CD4-positive, alpha-beta memory T cell (primary cell): ENCODE measurements at regions of chr19 and their contacts with region 1.

Region 1: DNA sequence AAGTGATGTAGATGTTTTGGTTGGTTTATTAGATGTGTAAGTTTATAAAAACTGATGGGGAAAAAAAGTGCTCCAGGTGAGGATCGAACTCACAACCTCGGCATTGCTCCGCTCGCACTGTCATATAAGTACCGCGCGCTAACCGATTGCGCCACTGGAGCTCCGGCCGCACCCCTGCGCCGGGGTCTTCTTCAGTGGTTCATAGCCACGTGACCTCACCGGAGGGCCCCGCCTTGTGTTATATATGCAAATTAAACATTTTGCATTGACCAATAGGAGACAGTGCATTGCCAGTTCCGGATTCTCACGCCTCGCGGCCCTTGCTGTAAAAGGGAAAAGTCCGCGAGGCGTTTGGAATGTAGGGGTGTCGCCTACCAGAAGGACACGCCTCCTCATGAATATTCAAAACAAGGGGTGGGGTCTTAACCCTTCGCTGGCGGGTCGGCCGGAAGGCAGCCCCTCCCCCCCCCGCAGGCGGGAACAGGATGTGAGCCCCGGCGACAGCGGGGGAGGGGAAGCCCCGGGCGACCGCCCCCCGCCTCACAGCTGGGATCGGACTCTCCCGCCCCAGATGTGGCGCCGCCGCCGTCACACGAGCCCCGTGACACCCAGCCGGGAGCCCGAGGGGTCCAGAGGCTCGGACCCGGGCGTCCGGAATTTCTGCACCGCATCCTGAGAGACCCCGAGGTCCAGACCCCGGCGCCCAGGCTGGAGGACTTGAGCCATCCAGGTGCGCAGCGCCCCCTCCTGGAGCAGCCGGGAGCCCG is at the start of gene PLEKHG2:
- DNase-seq: peak; percentile 97 to 99 (median 98)
- H3K4me3 ChIP-seq: peak within 1 kb of the TSS; percentile 69 to 74
- H3K4me3 Mint-ChIP-seq: peak within 1 kb of the TSS; percentile 76 to 98 (median 90)
- H3K27ac ChIP-seq: peak within 1 kb of the TSS; percentile 100
- H3K27ac Mint-ChIP-seq: peak within 1 kb of the TSS; percentile 94 to 100 (median 99)
- H3K4me1 ChIP-seq: peaks cover 32% of the 10 kb centered on the region
- H3K4me1 Mint-ChIP-seq: peaks cover 25 to 60% (median 34%) of the 10 kb centered on the region in 4 donors
- H3K27me3 ChIP-seq: no peaks in the 10 kb centered on the region
- H3K27me3 Mint-ChIP-seq: peaks cover 0 to 7% of the 10 kb centered on the region in 2 donors
- total RNA-seq, gene PLEKHG2: 12.1 to 17.0 TPM

Region 2: GRCh38 chr19:38209671-38210457 is 1202.4 kb before region 1 on chr19:
- CTCF ChIA-PET with region 1: no interaction called
- POLR2A ChIA-PET with region 1: no interaction called
- intact Hi-C with region 1: no loop called
- DNase-seq: no peak
- H3K4me3 ChIP-seq: no peak overlapping the region
- H3K4me3 Mint-ChIP-seq: peak overlapping the region in 6 of 8 donors; percentile 12 to 68 (median 28)
- H3K27ac ChIP-seq: no peak overlapping the region
- H3K27ac Mint-ChIP-seq: peak overlapping the region in 2 of 7 donors; percentile 14 to 60
- H3K4me1 ChIP-seq: peaks cover 22% of the 10 kb centered on the region
- H3K4me1 Mint-ChIP-seq: peaks cover 13 to 29% (median 23%) of the 10 kb centered on the region in 4 donors
- H3K27me3 ChIP-seq: peaks cover 11% of the 10 kb centered on the region
- H3K27me3 Mint-ChIP-seq: peaks cover 18 to 20% of the 10 kb centered on the region in 2 donors

Region 3: DNA sequence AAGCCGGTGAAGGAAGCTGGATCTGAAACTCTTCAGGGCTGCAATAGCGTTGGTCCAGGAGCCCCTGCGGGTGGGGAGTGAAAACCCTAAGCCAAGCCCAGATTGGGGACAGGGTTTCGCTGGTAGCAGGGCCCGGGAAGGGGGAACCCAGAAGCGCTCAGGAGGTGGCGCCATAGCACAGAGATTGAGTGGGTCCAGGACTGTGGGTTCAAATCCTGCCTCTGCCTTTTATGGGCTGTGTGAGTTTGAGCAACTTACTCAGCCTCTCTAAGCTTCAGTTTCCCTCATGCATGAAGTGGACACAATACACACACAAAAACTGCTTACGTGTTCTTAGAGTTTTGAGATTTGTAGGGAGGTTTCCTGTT is 199.9 kb before region 1 on chr19:
- CTCF ChIA-PET with region 1: no interaction called
- POLR2A ChIA-PET with region 1: no interaction called
- intact Hi-C with region 1: loop called (anchors 1 kb)
- DNase-seq: peak in 4 of 5 donors; percentile 48 to 50 (median 49)
- H3K4me3 ChIP-seq: no peak overlapping the region
- H3K4me3 Mint-ChIP-seq: no peak overlapping the region
- H3K27ac ChIP-seq: no peak overlapping the region
- H3K27ac Mint-ChIP-seq: no peak overlapping the region
- H3K4me1 ChIP-seq: no peaks in the 10 kb centered on the region
- H3K4me1 Mint-ChIP-seq: no peaks in the 10 kb centered on the region
- H3K27me3 ChIP-seq: no peaks in the 10 kb centered on the region
- H3K27me3 Mint-ChIP-seq: peaks cover 5% of the 10 kb centered on the region in 2 donors

Region 4: DNA sequence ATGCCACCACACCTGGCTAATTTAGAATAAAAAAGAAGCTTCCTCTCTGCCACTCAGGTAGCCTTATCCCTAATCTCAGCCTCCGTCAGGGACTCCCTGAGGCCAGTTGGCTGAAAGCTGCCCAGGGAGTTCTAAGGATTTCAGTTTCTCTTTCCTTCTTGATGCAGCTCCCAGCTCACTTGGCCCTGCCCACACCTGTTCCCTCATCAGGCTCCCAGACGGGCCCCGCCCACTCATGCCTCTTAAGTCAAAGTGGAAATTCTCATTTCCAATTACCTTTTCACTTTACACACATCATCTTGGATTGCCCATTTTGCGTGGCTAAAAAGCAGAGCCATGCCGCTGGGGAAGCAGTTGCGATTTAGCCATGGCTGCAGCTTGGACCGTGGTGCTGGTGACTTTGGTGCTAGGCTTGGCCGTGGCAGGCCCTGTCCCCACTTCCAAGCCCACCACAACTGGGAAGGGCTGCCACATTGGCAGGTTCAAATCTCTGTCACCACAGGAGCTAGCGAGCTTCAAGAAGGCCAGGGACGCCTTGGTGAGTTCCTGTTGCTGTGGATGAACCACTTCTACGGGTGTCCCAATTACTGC is 116.1 kb before region 1 on chr19 and contains the start of gene IFNL1:
- CTCF ChIA-PET with region 1: no interaction called
- POLR2A ChIA-PET with region 1: no interaction called
- intact Hi-C with region 1: no loop called
- DNase-seq: no peak
- H3K4me3 ChIP-seq: no peak within 1 kb of the TSS
- H3K4me3 Mint-ChIP-seq: peak within 1 kb of the TSS in 2 of 8 donors; percentile 31 to 46
- H3K27ac ChIP-seq: no peak within 1 kb of the TSS
- H3K27ac Mint-ChIP-seq: peak within 1 kb of the TSS in 3 of 7 donors; percentile 54 to 84 (median 74)
- H3K4me1 ChIP-seq: peaks cover 15% of the 10 kb centered on the region
- H3K4me1 Mint-ChIP-seq: peaks cover 10 to 33% (median 20%) of the 10 kb centered on the region in 4 donors
- H3K27me3 ChIP-seq: no peaks in the 10 kb centered on the region
- H3K27me3 Mint-ChIP-seq: peaks cover 2 to 4% of the 10 kb centered on the region in 2 donors
- total RNA-seq, gene IFNL1: not detected

Region 5: GRCh38 chr19:39335168-39335548 is 77.1 kb before region 1 on chr19:
- CTCF ChIA-PET with region 1: interaction called, 5 read pairs
- POLR2A ChIA-PET with region 1: interaction called, 21 read pairs
- intact Hi-C with region 1: no loop called
- DNase-seq: peak in 3 of 5 donors; percentile 30 to 59 (median 39)
- H3K4me3 ChIP-seq: peak overlapping the region; percentile 67 to 99
- H3K4me3 Mint-ChIP-seq: peak overlapping the region; percentile 97 to 100 (median 98)
- H3K27ac ChIP-seq: peak overlapping the region; percentile 88
- H3K27ac Mint-ChIP-seq: peak overlapping the region; percentile 96 to 100 (median 99)
- H3K4me1 ChIP-seq: peaks cover 74% of the 10 kb centered on the region
- H3K4me1 Mint-ChIP-seq: peaks cover 31 to 74% (median 54%) of the 10 kb centered on the region in 4 donors
- H3K27me3 ChIP-seq: no peaks in the 10 kb centered on the region
- H3K27me3 Mint-ChIP-seq: no peaks in the 10 kb centered on the region

Region 6: DNA sequence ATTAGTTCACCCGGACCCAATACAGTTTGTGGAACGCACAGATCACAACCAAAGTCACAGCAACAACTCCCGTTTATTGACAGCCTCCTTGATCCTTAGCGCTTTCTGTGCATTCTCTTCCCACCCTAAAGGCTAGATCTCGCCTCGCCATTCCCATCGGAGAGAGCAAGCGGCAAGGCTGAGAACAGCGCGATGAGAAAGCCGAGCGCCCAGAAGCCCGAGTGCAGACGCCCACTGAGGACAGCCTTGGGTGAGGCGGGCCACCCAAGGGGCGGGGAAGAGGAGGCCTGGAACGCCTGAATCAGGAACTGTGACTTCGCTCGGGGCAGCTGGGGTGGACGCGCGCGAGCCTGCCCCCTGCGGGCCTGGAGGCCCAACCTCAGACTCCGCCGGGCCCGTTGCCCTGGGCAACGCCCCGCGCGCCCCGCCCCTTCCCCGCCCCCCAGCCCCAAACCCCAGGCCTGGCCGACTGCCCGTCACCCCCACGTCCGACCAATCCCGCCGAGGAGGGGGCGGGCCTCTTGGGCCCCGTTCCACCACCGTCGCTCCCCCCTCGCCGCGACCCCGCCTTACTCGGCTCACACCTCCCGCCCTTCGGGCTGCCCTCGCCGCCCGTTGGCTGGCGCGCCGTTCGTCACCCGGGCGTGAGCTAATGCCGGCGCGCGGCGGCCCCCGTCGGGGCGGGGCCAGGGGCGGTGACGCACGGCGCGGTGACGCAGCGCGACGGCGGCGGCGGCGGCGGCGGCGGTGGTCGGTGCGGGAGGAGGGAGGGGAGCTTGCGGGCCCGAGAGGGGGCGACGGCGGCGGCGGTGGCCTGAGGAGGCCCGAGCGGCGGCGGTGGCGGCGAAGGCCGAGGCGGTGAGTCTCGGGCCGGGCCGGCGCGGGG is 70.3 kb before region 1 on chr19 and contains the start of gene SAMD4B:
- CTCF ChIA-PET with region 1: interaction called, 4 read pairs
- POLR2A ChIA-PET with region 1: interaction called, 19 read pairs
- intact Hi-C with region 1: loop called (anchors 1 kb)
- DNase-seq: peak; percentile 99 to 100 (median 99)
- H3K4me3 ChIP-seq: peak within 1 kb of the TSS; percentile 86 to 91
- H3K4me3 Mint-ChIP-seq: peak within 1 kb of the TSS; percentile 87 to 99 (median 94)
- H3K27ac ChIP-seq: peak within 1 kb of the TSS; percentile 78
- H3K27ac Mint-ChIP-seq: peak within 1 kb of the TSS; percentile 91 to 98 (median 95)
- H3K4me1 ChIP-seq: peaks cover 64% of the 10 kb centered on the region
- H3K4me1 Mint-ChIP-seq: peaks cover 50 to 77% (median 64%) of the 10 kb centered on the region in 4 donors
- H3K27me3 ChIP-seq: no peaks in the 10 kb centered on the region
- H3K27me3 Mint-ChIP-seq: no peaks in the 10 kb centered on the region
- total RNA-seq, gene SAMD4B: 65.0 to 79.6 TPM

Region 7: GRCh38 chr19:39390755-39391592 is 21.3 kb before region 1 on chr19 and contains the starts of genes MED29 and PAF1:
- CTCF ChIA-PET with region 1: interaction called, 215 read pairs
- POLR2A ChIA-PET with region 1: interaction called, 384 read pairs
- intact Hi-C with region 1: loop called (anchors 1 kb)
- DNase-seq: peak; percentile 96 to 99 (median 99)
- H3K4me3 ChIP-seq: peak within 1 kb of the TSS; percentile 71 to 93
- H3K4me3 Mint-ChIP-seq: peak within 1 kb of the TSS; percentile 90 to 99 (median 98)
- H3K27ac ChIP-seq: peak within 1 kb of the TSS; percentile 99
- H3K27ac Mint-ChIP-seq: peak within 1 kb of the TSS; percentile 93 to 100 (median 100)
- H3K4me1 ChIP-seq: peaks cover 26% of the 10 kb centered on the region
- H3K4me1 Mint-ChIP-seq: peaks cover 22 to 46% (median 33%) of the 10 kb centered on the region in 4 donors
- H3K27me3 ChIP-seq: no peaks in the 10 kb centered on the region
- H3K27me3 Mint-ChIP-seq: no peaks in the 10 kb centered on the region
- total RNA-seq, gene MED29: 43.1 to 51.3 TPM
- total RNA-seq, gene PAF1: 49.2 to 53.8 TPM

Region 8: GRCh38 chr19:39397360-39398296 is 14.7 kb before region 1 on chr19:
- CTCF ChIA-PET with region 1: interaction called, 215 read pairs
- POLR2A ChIA-PET with region 1: interaction called, 384 read pairs
- intact Hi-C with region 1: loop called (anchors 1 kb)
- DNase-seq: peak; percentile 90 to 91 (median 91)
- H3K4me3 ChIP-seq: peak overlapping the region in 1 of 2 donors; percentile 21
- H3K4me3 Mint-ChIP-seq: peak overlapping the region; percentile 57 to 70 (median 64)
- H3K27ac ChIP-seq: peak overlapping the region; percentile 72
- H3K27ac Mint-ChIP-seq: peak overlapping the region; percentile 94 to 100 (median 97)
- H3K4me1 ChIP-seq: peaks cover 58% of the 10 kb centered on the region
- H3K4me1 Mint-ChIP-seq: peaks cover 32 to 67% (median 53%) of the 10 kb centered on the region in 4 donors
- H3K27me3 ChIP-seq: no peaks in the 10 kb centered on the region
- H3K27me3 Mint-ChIP-seq: no peaks in the 10 kb centered on the region

Region 9: DNA sequence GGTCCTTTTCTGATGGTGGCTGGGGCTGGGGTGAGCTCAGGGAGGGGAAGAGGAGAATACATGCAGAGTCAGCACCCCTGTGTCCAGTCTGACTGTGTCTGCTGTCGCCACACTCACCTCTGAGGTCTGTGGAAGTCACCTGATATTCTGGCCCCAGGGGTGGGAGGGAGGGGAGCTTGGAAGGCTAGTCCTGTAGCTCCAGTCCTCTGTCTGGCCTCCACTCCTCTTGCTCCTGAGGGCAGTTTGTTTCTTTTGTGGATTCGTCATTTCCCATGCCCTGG is 107.8 kb after region 1 on chr19:
- CTCF ChIA-PET with region 1: no interaction called
- POLR2A ChIA-PET with region 1: no interaction called
- intact Hi-C with region 1: no loop called
- DNase-seq: no peak
- H3K4me3 ChIP-seq: no peak overlapping the region
- H3K4me3 Mint-ChIP-seq: no peak overlapping the region
- H3K27ac ChIP-seq: no peak overlapping the region
- H3K27ac Mint-ChIP-seq: no peak overlapping the region
- H3K4me1 ChIP-seq: peaks cover 12% of the 10 kb centered on the region
- H3K4me1 Mint-ChIP-seq: peaks cover 4 to 13% (median 8%) of the 10 kb centered on the region in 4 donors
- H3K27me3 ChIP-seq: peaks cover 8% of the 10 kb centered on the region
- H3K27me3 Mint-ChIP-seq: peaks cover 15 to 16% of the 10 kb centered on the region in 2 donors

Region 10: GRCh38 chr19:39532233-39533002 is 120.1 kb after region 1 on chr19 and contains the start of gene EID2B:
- CTCF ChIA-PET with region 1: interaction called, 3 read pairs
- POLR2A ChIA-PET with region 1: interaction called, 4 read pairs
- intact Hi-C with region 1: loop called (anchors 1 kb)
- DNase-seq: peak; percentile 92 to 95 (median 94)
- H3K4me3 ChIP-seq: peak within 1 kb of the TSS; percentile 19 to 92
- H3K4me3 Mint-ChIP-seq: peak within 1 kb of the TSS; percentile 91 to 96 (median 94)
- H3K27ac ChIP-seq: peak within 1 kb of the TSS; percentile 83
- H3K27ac Mint-ChIP-seq: peak within 1 kb of the TSS; percentile 81 to 95 (median 92)
- H3K4me1 ChIP-seq: peaks cover 20% of the 10 kb centered on the region
- H3K4me1 Mint-ChIP-seq: peaks cover 14 to 43% (median 28%) of the 10 kb centered on the region in 4 donors
- H3K27me3 ChIP-seq: no peaks in the 10 kb centered on the region
- H3K27me3 Mint-ChIP-seq: no peaks in the 10 kb centered on the region
- total RNA-seq, gene EID2B: 7.7 to 8.8 TPM

Region 11: GRCh38 chr19:39590265-39590664 is 178.0 kb after region 1 on chr19:
- CTCF ChIA-PET with region 1: no interaction called
- POLR2A ChIA-PET with region 1: no interaction called
- intact Hi-C with region 1: no loop called
- DNase-seq: no peak
- H3K4me3 ChIP-seq: no peak overlapping the region
- H3K4me3 Mint-ChIP-seq: no peak overlapping the region
- H3K27ac ChIP-seq: no peak overlapping the region
- H3K27ac Mint-ChIP-seq: no peak overlapping the region
- H3K4me1 ChIP-seq: no peaks in the 10 kb centered on the region
- H3K4me1 Mint-ChIP-seq: no peaks in the 10 kb centered on the region
- H3K27me3 ChIP-seq: no peaks in the 10 kb centered on the region
- H3K27me3 Mint-ChIP-seq: peaks cover 15 to 44% of the 10 kb centered on the region in 2 donors